ENCODE measurements at regions of chr15 and their contacts with region 1.

Region 1: GRCh38 chr15:53416219-53416940 is 343.1 kb downstream of the WDR72 start:
- DNase-seq: no peak
- H3K4me3 ChIP-seq: no peak overlapping the region
- H3K27ac ChIP-seq: no peak overlapping the region
- H3K4me1 ChIP-seq: no peaks in the 10 kb centered on the region
- H3K27me3 ChIP-seq: no peaks in the 10 kb centered on the region
- CTCF ChIP-seq: no peak

Region 2: DNA sequence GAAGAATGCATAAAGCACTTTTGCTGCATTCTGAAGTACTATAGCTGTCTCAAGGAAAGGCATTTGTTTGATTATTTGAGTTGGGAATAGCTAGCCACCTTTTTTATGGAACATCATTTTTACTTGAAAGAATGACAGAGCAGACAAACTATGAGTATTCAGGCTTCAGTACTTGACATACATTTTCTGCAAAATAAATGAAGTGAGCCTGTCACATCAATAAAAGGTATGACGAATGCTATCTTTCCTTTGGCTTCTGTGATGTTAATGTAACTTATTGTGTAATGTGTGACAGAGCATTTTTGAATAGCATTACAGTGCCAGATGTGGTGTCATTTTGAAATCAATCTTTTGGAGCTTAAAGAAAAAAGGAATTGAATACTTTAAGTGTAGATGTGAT is 185.9 kb before region 1 on chr15:
- CTCF ChIA-PET with region 1: no interaction called
- POLR2A ChIA-PET with region 1: no interaction called
- intact Hi-C with region 1: no loop called
- DNase-seq: no peak
- H3K4me3 ChIP-seq: no peak overlapping the region
- H3K27ac ChIP-seq: no peak overlapping the region
- H3K4me1 ChIP-seq: no peaks in the 10 kb centered on the region
- H3K27me3 ChIP-seq: no peaks in the 10 kb centered on the region
- CTCF ChIP-seq: no peak

Region 3: DNA sequence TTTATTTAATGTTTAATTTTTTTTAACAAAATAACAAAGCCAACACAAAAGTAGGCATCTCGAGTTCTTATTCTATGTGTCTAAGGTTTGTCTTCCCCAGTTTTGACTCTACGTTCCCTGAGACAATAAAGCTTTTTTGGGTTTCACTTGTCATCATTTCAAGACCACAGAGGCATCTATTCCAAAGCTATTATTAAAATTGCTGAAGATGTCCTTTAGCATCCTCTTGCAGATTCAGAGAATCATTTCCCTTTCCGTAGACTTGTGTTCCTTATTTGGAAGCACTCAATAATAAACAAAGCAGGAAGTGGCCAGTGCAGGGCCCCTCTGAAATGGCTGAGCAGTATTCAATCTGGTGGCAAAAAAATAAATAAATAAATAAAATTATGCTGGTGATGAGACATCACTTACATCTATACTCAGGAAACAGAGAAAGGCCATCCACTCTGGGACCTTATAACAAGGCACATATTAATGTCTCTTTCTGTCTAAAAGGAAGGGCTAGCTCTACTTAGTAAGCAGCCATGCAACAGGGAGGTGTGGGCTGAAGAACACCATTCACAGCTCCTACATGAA is 19.3 kb before region 1 on chr15:
- CTCF ChIA-PET with region 1: no interaction called
- POLR2A ChIA-PET with region 1: no interaction called
- intact Hi-C with region 1: loop called (anchors 2 kb)
- DNase-seq: no peak
- H3K4me3 ChIP-seq: no peak overlapping the region
- H3K27ac ChIP-seq: no peak overlapping the region
- H3K4me1 ChIP-seq: no peaks in the 10 kb centered on the region
- H3K27me3 ChIP-seq: no peaks in the 10 kb centered on the region
- CTCF ChIP-seq: no peak

Region 4: DNA sequence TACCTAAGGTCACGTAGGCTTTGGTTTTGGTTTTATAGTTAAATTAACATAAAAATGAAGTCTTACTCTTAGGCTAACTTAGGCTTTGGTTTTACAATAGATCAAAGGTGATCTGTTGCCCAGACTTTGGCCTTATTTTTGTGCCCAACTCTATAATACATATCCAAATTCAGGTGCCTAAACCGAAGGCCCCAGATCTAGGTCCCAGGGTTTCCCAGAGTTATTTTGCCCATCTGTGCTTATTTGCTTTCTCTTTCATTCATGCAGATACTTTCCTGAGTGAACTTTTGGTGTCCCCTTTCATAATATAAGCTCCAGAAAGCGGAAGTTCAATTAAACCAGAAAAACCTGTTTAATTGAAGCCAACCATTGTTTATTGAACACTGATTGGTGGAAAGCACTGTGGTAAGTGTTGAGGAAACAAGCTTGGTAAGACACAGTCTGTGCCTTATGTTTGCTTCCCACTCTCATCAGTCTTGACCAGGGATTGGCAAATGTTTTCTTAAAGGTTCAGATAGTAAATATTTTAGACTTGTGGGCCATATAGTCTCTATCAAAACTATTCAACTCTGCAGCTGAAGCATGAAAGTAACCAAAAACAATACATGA is 133.4 kb after region 1 on chr15:
- CTCF ChIA-PET with region 1: no interaction called
- POLR2A ChIA-PET with region 1: no interaction called
- intact Hi-C with region 1: no loop called
- DNase-seq: no peak
- H3K4me3 ChIP-seq: no peak overlapping the region
- H3K27ac ChIP-seq: no peak overlapping the region
- H3K4me1 ChIP-seq: no peaks in the 10 kb centered on the region
- H3K27me3 ChIP-seq: no peaks in the 10 kb centered on the region
- CTCF ChIP-seq: no peak

Region 5: GRCh38 chr15:53586799-53587198 is 170.4 kb after region 1 on chr15:
- CTCF ChIA-PET with region 1: no interaction called
- POLR2A ChIA-PET with region 1: no interaction called
- intact Hi-C with region 1: no loop called
- DNase-seq: peak; percentile 65
- H3K4me3 ChIP-seq: no peak overlapping the region
- H3K27ac ChIP-seq: no peak overlapping the region
- H3K4me1 ChIP-seq: no peaks in the 10 kb centered on the region
- H3K27me3 ChIP-seq: no peaks in the 10 kb centered on the region
- CTCF ChIP-seq: peak; percentile 67